GM13976 (cell line): ENCODE measurements at regions of chr16 and their contacts with region 1.

Region 1: DNA sequence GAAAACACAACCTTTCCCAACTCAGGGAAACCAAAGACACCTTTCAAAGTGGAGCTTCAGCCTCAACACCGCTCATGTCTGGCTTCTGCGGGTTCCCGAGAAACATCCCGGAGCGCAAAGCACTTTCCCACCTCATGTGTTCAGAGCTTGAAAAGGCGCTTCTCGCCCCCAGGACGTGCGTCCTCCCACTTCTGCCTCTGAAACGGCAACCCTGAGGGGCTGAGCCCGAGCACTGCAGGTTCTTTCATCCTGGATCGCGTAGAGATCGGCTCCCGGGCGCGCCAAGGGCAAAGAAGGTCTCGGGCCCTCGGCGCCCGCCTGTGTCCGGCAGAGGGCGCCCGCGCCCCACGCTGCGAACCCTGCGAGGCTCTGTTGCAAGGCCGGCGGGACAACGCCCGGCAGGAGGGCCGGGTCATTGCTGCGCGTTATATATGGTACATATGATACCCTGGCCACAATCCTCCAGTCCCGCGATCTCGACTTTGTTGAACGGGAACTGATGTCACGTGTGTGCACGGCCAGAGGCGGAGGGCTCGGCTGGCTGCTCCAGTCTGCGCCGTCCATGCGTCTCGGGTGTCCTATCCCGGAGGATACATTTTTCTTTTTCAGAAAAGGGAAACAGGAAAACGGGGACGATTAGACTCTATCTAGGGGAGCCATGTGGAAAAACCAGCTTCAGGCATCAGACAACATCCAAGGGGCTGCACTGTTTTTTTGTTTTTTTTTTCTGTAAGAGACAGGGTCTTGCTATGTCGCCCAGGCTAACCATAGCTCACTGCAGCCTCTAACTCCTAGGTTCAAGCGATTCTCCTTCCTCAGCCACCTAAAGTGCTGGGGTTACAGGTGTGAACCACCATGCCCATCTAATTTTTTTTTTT is 19.1 kb downstream of the COQ7 start:
- DNase-seq: peak; percentile 89
- CTCF ChIP-seq: peak; percentile 92

Region 2: DNA sequence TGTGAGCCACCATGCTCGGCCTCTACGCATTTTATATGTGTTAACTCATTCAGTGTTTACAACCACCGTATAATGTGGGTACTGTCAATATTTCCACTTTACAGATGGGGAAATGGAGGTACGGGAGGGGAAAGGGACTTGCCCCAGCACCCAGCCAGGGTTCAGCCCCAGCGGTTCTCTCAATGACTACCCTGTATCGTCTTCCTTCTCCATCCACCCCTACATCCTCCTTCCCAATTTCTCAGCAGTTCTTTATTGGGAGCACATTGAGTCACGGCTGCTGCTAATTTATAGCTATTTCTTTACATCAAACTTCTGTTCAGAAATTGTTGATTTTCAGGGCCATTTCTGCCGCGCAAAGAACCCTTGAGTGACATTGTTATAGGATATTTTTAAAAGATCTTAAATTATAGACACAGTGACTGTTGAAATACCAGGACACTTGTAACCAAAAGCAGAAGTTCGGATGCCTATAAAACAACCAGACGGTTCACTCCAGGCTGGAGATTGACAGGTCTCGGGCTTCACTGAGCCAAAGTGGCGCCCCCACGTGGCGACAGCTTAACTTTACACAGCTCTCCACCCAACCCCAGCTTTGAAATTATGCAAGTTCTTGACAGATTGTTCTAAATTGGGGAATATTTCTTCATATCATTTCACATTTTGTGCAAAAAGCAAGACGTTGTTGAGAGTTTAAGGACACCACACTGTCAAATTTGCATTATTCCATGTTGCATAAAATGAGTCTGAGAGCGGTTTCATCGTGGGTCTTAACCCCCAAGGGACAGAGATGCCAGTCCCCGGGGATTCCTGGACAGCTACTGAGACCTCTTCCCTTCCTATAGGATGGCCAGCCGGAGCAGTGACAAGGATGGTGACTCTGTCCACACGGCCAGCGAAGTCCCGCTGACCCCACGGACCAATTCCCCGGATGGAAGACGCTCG is 93.3 kb after region 1 on chr16:
- in situ Hi-C with region 1: loop called (anchors 5 kb)
- DNase-seq: peak; percentile 85
- CTCF ChIP-seq: peak; percentile 62

Region 3: GRCh38 chr16:19375561-19376158 is 289.1 kb after region 1 on chr16:
- in situ Hi-C with region 1: loop called (anchors 5 kb)
- DNase-seq: peak; percentile 72
- CTCF ChIP-seq: peak; percentile 55